ENCODE measurements at regions of chr6 and their contacts with region 1.

Region 1: GRCh38 chr6:89862273-89862672 is 32.0 kb upstream of the GJA10 start:
- DNase-seq: no peak
- H3K4me3 ChIP-seq: no peak overlapping the region
- H3K27ac ChIP-seq: no peak overlapping the region
- H3K4me1 ChIP-seq: no peaks in the 10 kb centered on the region
- H3K27me3 ChIP-seq: no peaks in the 10 kb centered on the region
- CTCF ChIP-seq: no peak

Region 2: DNA sequence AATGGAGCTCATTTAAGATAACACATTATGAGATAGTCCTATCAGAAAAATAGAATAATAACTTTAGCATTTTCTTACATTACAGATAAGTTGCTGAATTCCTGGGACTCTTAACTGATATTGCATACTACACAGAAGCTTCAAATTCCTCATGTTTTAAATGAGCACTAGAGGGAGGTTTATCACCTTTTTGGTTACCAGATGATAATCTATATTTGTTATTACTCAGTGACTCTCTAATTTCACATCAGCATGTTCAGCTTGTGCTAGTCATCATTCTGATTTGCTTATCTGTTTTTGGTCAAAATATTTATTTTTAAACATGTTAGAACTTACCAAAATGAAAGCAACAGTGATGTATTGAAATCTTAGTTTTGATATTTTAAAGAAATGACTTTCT is 11.4 kb after region 1 on chr6:
- CTCF ChIA-PET with region 1: no interaction called
- POLR2A ChIA-PET with region 1: no interaction called
- intact Hi-C with region 1: loop called (anchors 1 kb)
- DNase-seq: no peak
- H3K4me3 ChIP-seq: no peak overlapping the region
- H3K27ac ChIP-seq: no peak overlapping the region
- H3K4me1 ChIP-seq: no peaks in the 10 kb centered on the region
- H3K27me3 ChIP-seq: no peaks in the 10 kb centered on the region
- CTCF ChIP-seq: no peak